AG04449 (cell line): ENCODE measurements at regions of chr2 and their contacts with region 1.

Region 1: GRCh38 chr2:232854082-232854481 is 16.0 kb upstream of the SNORC start:
- DNase-seq: peak; percentile 38
- H3K4me3 ChIP-seq: no peak overlapping the region
- CTCF ChIP-seq: no peak

Region 2: GRCh38 chr2:232838406-232838874 is 15.6 kb before region 1 on chr2:
- CTCF ChIA-PET with region 1: interaction called, 33 read pairs
- POLR2A ChIA-PET with region 1: interaction called, 5 read pairs
- DNase-seq: no peak
- H3K4me3 ChIP-seq: no peak overlapping the region
- CTCF ChIP-seq: no peak

Region 3: GRCh38 chr2:233033672-233034071 is 179.6 kb after region 1 on chr2:
- CTCF ChIA-PET with region 1: interaction called, 18 read pairs
- POLR2A ChIA-PET with region 1: no interaction called
- DNase-seq: no peak
- H3K4me3 ChIP-seq: no peak overlapping the region
- CTCF ChIP-seq: no peak

Region 4: DNA sequence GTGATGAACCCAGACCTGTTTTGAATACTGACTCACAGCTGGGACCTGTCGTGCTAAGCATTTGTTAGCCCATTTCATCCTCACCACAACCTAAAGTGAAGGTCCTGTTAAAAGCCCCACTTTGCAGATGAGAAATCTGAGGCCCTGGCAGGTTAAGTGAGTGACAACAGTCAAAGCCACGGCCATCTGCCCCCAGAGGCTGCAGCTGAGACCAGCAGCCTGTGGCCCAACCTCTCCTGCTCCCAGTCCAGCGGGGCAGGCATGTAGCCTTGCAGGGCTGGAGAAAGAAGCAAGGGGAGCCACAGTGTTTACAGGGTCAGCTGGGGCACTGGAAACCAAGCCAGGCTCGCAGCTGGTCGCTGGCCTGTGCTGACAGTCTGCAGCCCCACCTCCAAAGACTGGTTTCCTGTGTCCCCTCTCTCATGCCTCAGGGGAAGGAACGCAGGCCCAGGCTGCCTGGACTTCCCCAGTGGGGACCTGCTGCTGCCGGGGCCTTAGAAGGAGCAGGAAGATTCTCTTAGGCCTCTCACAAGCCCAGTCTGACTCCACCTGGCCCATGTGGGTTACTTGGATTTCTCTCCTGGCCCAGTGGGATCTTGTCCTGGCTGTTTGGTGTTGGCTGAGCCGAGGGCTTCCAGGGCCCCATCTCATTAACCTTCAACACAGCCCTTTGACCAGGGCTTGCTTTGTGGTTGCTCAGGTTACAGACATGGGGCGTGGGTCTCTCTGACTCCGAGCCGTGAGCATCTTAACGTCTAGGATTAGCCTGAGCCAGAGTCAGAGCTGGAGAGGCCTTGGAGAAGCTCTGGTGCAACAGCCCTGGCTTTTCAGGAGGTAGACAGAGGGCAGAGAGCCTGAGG is 207.7 kb after region 1 on chr2:
- CTCF ChIA-PET with region 1: interaction called, 168 read pairs
- POLR2A ChIA-PET with region 1: no interaction called
- DNase-seq: no peak
- H3K4me3 ChIP-seq: no peak overlapping the region
- CTCF ChIP-seq: no peak

Region 5: GRCh38 chr2:233251306-233252116 is 397.4 kb after region 1 on chr2 and contains the start of gene ATG16L1:
- CTCF ChIA-PET with region 1: interaction called, 92 read pairs
- POLR2A ChIA-PET with region 1: no interaction called
- DNase-seq: peak; percentile 70
- H3K4me3 ChIP-seq: peak within 1 kb of the TSS; percentile 100
- CTCF ChIP-seq: peak; percentile 97